ENCODE measurements at regions of chr10 and their contacts with region 1.

Region 1: DNA sequence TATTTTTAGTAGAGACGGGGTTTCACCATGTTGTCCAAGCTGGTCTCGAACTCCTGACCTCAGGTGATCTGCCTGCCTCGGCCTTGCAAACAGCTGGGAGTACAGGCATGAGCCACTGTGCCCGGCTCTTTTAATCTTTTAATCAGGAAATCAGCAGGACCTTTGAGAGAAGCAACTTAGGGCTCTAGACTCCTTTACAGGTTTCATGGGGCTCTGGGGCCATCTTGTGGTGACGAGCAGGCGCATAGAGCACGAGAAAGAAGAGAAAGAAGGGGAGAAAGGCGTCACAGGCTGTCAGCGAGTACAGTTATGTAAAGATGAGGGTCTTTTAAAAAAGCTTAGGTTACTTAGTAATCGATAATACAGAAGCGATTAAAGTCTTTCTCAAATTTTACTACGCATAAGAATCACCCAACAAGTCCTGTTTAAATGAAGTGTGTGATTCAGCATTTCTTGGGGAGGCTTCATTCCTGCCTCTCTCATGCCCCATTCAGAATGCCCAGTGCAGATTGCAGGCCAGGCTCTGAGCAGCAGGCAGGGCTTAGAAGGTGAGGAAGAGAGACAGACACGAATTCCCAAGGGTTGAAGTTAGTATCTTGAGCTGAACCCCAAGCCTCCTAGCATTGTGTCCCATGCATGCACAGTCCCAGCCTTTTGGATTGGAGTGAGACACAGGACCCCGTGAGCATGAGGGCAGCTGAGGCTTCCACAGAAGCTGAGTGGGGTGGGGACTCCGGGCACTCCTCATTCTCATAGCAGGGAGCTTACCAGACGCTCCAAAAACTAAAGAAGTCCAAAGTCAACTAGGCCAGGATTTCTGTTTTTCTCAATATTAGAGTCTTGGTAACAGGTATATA is 23.6 kb upstream of the PFKP start:
- DNase-seq: peak; percentile 69
- ATAC-seq: peak; percentile 87
- H3K4me3 ChIP-seq: no peak overlapping the region
- H3K27ac ChIP-seq: no peak overlapping the region
- H3K4me1 ChIP-seq: peaks cover 13% of the 10 kb centered on the region
- H3K27me3 ChIP-seq: no peaks in the 10 kb centered on the region; a peak in 2 of 5 replicates
- CTCF ChIP-seq: peak; percentile 80
- EP300 ChIP-seq: no peak
- POLR2A ChIP-seq: no peak
- RAD21 ChIP-seq: peak; percentile 72

Region 2: GRCh38 chr10:2619472-2619871 is 424.3 kb before region 1 on chr10:
- CTCF ChIA-PET with region 1: no interaction called
- POLR2A ChIA-PET with region 1: no interaction called
- in situ Hi-C with region 1: no loop called
- intact Hi-C with region 1: loop called (anchors 2 kb)
- DNase-seq: peak; percentile 7
- ATAC-seq: peak; percentile 76
- H3K4me3 ChIP-seq: no peak overlapping the region
- H3K27ac ChIP-seq: no peak overlapping the region
- H3K4me1 ChIP-seq: no peaks in the 10 kb centered on the region
- H3K27me3 ChIP-seq: no peaks in the 10 kb centered on the region
- CTCF ChIP-seq: 0 out of 2 replicates have a peak, but pooled peaks have one; percentile 35
- EP300 ChIP-seq: no peak
- POLR2A ChIP-seq: no peak
- RAD21 ChIP-seq: no peak

Region 3: GRCh38 chr10:2839081-2839725 is 204.5 kb before region 1 on chr10:
- CTCF ChIA-PET with region 1: interaction called, 14 read pairs
- POLR2A ChIA-PET with region 1: no interaction called
- in situ Hi-C with region 1: loop called (anchors 10 kb)
- intact Hi-C with region 1: no loop called
- DNase-seq: peak; percentile 33
- ATAC-seq: peak; percentile 88
- H3K4me3 ChIP-seq: no peak overlapping the region
- H3K27ac ChIP-seq: no peak overlapping the region
- H3K4me1 ChIP-seq: no peaks in the 10 kb centered on the region
- H3K27me3 ChIP-seq: peaks cover 3 to 26% of the 10 kb centered on the region in 2 experiments; a peak in 3 of 5 replicates
- CTCF ChIP-seq: peak; percentile 66
- EP300 ChIP-seq: no peak
- POLR2A ChIP-seq: no peak
- RAD21 ChIP-seq: no peak

Region 4: GRCh38 chr10:2844925-2845324 is 198.8 kb before region 1 on chr10:
- CTCF ChIA-PET with region 1: interaction called, 14 read pairs
- POLR2A ChIA-PET with region 1: no interaction called
- in situ Hi-C with region 1: loop called (anchors 10 kb)
- intact Hi-C with region 1: no loop called
- DNase-seq: no peak
- ATAC-seq: no peak
- H3K4me3 ChIP-seq: no peak overlapping the region
- H3K27ac ChIP-seq: no peak overlapping the region
- H3K4me1 ChIP-seq: no peaks in the 10 kb centered on the region
- H3K27me3 ChIP-seq: peaks cover 0 to 4% of the 10 kb centered on the region in 2 experiments; a peak in 1 of 5 replicates
- CTCF ChIP-seq: no peak
- EP300 ChIP-seq: no peak
- POLR2A ChIP-seq: no peak
- RAD21 ChIP-seq: no peak

Region 5: GRCh38 chr10:2927958-2928840 is 115.5 kb before region 1 on chr10:
- CTCF ChIA-PET with region 1: interaction called, 15 read pairs
- POLR2A ChIA-PET with region 1: no interaction called
- in situ Hi-C with region 1: loop called (anchors 5 kb)
- intact Hi-C with region 1: no loop called
- DNase-seq: peak; percentile 34
- ATAC-seq: peak; percentile 93
- H3K4me3 ChIP-seq: no peak overlapping the region
- H3K27ac ChIP-seq: no peak overlapping the region
- H3K4me1 ChIP-seq: no peaks in the 10 kb centered on the region
- H3K27me3 ChIP-seq: peaks cover 0 to 40% of the 10 kb centered on the region in 2 experiments
- CTCF ChIP-seq: peak; percentile 86
- EP300 ChIP-seq: no peak
- POLR2A ChIP-seq: no peak
- RAD21 ChIP-seq: peak; percentile 70

Region 6: DNA sequence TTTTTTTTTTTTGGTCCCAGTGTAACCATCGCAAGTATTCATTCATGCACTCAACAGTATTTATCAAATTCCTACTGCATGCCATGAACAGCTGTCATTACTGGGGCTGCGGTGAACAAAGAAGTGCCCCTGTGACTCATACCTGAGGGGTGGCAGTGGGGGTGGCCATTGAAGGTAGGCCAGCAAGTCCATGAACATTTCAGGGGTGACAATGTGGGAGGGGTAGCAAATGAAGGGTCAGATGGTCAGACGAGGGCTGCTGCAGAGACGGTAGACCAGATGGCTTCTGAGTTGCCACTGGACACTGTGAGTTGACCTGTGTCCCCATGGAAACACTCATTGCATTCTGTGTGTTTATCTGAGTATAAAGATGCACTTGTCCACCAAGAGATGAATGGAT is 221.3 kb after region 1 on chr10:
- CTCF ChIA-PET with region 1: no interaction called
- POLR2A ChIA-PET with region 1: no interaction called
- in situ Hi-C with region 1: no loop called
- intact Hi-C with region 1: no loop called
- DNase-seq: no peak
- ATAC-seq: no peak
- H3K4me3 ChIP-seq: no peak overlapping the region
- H3K27ac ChIP-seq: no peak overlapping the region
- H3K4me1 ChIP-seq: no peaks in the 10 kb centered on the region
- H3K27me3 ChIP-seq: peaks cover 1 to 57% of the 10 kb centered on the region in 2 experiments; a peak in 4 of 5 replicates
- CTCF ChIP-seq: no peak
- EP300 ChIP-seq: no peak
- POLR2A ChIP-seq: no peak
- RAD21 ChIP-seq: no peak

Measured in HepG2 (cell line).